ENCODE measurements at regions of chr17 and their contacts with region 1.

Region 1: DNA sequence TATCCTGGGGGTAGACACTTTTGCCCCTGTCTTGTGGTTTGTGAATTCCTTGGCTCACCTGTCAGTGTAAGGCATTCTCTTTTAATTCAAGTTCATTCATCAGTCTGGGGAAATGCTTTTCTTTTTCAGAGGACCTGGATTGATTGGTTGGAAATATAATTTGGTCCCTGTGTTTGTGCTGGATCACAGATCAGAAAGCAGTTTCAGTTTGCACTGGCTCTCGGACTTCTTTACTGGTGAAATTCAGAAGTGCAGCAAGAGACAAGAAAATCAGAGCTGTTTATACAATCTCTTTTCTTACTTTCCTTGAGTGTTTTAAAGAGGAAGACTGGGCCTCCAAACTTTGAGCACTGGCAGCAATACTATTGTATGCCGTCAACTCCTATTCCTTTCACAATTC is 161.8 kb upstream of the KCNJ16 start:
- DNase-seq: no peak
- H3K4me3 ChIP-seq: peak overlapping the region; percentile 13 to 37 (median 26)
- H3K27ac ChIP-seq: peak overlapping the region; percentile 53 to 68 (median 58)
- H3K4me1 ChIP-seq: peaks cover 0 to 16% (median 8%) of the 10 kb centered on the region in 4 donors
- H3K27me3 ChIP-seq: no peaks in the 10 kb centered on the region
- CTCF ChIP-seq: peak in 1 of 3 experiments; percentile 43
- EP300 ChIP-seq: no peak
- POLR2A ChIP-seq: no peak

Region 2: GRCh38 chr17:69761751-69762321 is 151.4 kb before region 1 on chr17:
- intact Hi-C with region 1: loop called (anchors 10 kb)
- DNase-seq: no peak
- H3K4me3 ChIP-seq: no peak overlapping the region
- H3K27ac ChIP-seq: peak overlapping the region; percentile 6 to 51 (median 42)
- H3K4me1 ChIP-seq: peaks cover 3 to 34% (median 17%) of the 10 kb centered on the region in 4 donors
- H3K27me3 ChIP-seq: no peaks in the 10 kb centered on the region
- CTCF ChIP-seq: no peak
- EP300 ChIP-seq: no peak
- POLR2A ChIP-seq: no peak